HCT116 (cell line): ENCODE measurements at regions of chr10 and their contacts with region 1.

Region 1: GRCh38 chr10:125116652-125117310 is 43.6 kb downstream of the CTBP2 start:
- DNase-seq: no peak
- ATAC-seq: no peak
- H3K4me3 ChIP-seq: no peak overlapping the region
- H3K27ac ChIP-seq: no peak overlapping the region
- H3K4me1 ChIP-seq: peaks cover 23 to 42% of the 10 kb centered on the region in 2 experiments
- H3K27me3 ChIP-seq: no peaks in the 10 kb centered on the region
- CTCF ChIP-seq: no peak
- POLR2A ChIP-seq: no peak
- RAD21 ChIP-seq: no peak

Region 2: GRCh38 chr10:124992462-124993344 is 124.1 kb before region 1 on chr10:
- CTCF ChIA-PET with region 1: no interaction called
- POLR2A ChIA-PET with region 1: no interaction called
- RAD21 ChIA-PET with region 1: no interaction called
- intact Hi-C with region 1: no loop called
- DNase-seq: peak; percentile 43
- ATAC-seq: peak; percentile 86
- H3K4me3 ChIP-seq: no peak overlapping the region
- H3K27ac ChIP-seq: no peak overlapping the region
- H3K4me1 ChIP-seq: no peaks in the 10 kb centered on the region
- H3K27me3 ChIP-seq: no peaks in the 10 kb centered on the region
- CTCF ChIP-seq: peak; percentile 49 to 68 (median 66); a peak in 5 of 6 replicates
- POLR2A ChIP-seq: no peak
- RAD21 ChIP-seq: peak; percentile 78

Region 3: GRCh38 chr10:125038637-125039036 is 78.1 kb before region 1 on chr10:
- CTCF ChIA-PET with region 1: no interaction called
- POLR2A ChIA-PET with region 1: no interaction called
- RAD21 ChIA-PET with region 1: no interaction called
- intact Hi-C with region 1: loop called (anchors 1 kb)
- DNase-seq: peak; percentile 74
- ATAC-seq: peak; percentile 92
- H3K4me3 ChIP-seq: 0 out of 4 replicates have a peak overlapping the region, but pooled peaks of 1 of the 2 experiments have one; percentile 3
- H3K27ac ChIP-seq: peak overlapping the region; percentile 15
- H3K4me1 ChIP-seq: peaks cover 62 to 83% of the 10 kb centered on the region in 2 experiments
- H3K27me3 ChIP-seq: no peaks in the 10 kb centered on the region
- CTCF ChIP-seq: peak in 2 of 3 experiments; percentile 71 to 75; a peak in 4 of 6 replicates
- POLR2A ChIP-seq: no peak
- RAD21 ChIP-seq: no peak